Posterior cingulate gyrus (tissue), 11 donors: ENCODE measurements at regions of chr7 and their contacts with region 1.

Region 1: DNA sequence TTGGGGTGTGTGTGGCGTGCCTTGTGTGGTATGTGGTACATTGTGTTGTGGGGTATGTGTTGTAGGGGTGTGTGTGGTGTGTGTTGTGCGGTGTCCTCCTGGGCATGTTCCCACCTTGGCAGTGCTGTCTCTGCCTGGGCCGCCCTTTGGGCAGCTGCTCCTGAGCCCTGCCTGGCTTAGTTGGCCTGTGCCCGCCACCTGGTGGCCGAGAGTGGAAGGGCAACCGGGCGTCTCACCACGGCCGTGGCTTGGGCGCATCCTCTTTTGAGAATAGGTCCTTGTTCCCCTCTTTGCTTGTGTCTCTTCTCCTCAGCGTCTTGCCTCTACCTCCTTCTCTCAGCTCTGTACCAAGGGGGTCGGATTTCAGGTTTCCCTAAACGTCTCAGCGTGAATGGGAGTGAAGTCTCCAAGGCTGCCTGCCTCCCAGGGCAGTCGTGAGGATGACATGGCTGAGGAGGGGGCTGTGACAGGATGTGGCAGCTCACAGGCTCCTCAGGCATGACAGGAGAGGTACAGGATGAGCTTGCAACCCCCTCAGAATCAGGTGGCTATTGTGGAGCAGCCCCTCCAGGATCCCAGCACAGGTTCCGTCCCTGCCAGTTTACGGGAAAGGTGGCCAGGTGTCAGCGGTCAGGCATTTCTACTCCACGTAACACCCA is 98.4 kb upstream of the PODXL start:
- DNase-seq: peak; percentile 69 to 98 (median 91)

Region 2: DNA sequence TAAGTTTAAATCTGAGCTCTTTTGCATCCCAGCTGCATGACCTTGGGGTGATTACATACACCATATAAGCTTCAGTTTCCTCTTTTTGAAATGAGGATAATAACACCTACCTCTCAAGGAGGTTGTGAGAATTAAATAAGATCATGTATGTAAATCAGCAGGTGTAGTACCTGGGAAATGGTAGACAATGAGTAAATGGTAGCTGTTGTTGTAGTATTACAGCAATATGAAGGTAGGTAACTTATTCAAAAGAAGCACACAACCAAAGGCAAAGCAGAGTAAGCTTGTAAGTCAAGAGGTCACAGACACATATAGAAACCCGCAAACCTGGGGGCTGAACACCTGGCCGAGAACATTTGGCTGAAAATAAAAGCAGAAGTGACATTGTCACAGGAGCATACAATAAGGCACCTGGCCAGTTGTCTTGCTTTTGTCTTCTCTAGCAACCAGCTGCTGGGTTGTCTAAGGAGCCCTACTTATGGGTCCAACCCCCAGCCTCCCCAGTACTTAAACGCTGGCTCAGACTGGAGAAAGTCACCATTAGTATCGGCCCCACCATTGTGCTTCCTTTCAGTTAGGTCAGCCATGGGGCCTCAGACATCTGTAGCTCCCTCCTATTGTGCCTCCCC is 530.7 kb before region 1 on chr7:
- intact Hi-C with region 1: no loop called
- DNase-seq: no peak

Region 3: GRCh38 chr7:131436384-131436783 is 218.4 kb before region 1 on chr7:
- intact Hi-C with region 1: no loop called
- DNase-seq: no peak

Region 4: GRCh38 chr7:131507592-131508331 is 147.0 kb before region 1 on chr7:
- intact Hi-C with region 1: loop called (anchors 1 kb)
- DNase-seq: peak; percentile 79 to 98 (median 90)

Region 5: DNA sequence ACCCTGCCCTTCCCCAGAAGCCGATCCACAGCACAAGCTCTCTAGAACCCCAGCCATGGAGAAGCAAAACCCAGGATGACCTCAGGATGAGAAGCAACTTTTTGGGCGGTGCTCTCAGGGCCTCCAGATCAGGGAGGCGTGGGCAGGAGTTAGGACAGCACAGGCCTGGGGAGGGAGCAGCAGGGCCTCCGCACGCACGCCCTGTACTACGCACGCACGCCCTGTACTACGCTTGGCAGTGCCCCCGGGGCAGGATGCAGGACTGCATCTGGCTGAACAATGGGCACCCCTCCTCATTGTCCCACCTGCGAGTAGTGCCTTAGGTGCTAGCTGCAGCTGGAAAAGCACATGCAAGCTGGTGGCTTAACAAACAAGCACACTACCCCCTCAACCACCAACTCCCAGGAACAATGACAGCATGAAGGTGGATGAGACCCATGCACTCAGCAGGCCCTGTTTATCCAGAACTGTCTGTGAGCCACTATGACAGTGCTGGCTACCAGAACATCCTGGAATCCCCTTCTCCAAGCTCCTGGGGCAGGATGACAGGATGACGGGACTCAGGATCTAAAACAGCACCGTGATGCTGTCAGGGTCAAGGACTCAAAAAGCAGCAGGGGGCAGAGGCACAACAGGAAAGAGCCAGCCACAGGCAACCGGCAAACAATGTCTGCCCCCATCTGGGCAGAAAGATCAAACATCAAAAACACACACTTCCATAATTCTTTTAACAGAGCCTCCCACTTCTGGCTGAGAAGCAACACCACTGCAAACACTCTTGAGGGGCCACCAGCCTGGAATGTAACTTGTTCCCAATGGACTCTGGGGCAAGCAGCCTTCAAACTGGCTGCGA is 110.1 kb before region 1 on chr7:
- intact Hi-C with region 1: loop called (anchors 2 kb)
- DNase-seq: peak in 3 of 10 donors; percentile 40 to 79 (median 78)

Region 6: GRCh38 chr7:131556052-131556908 is 98.5 kb before region 1 on chr7 and contains the start of gene PODXL:
- intact Hi-C with region 1: loop called (anchors 5 kb)
- DNase-seq: peak; percentile 34 to 94 (median 48)

Region 7: DNA sequence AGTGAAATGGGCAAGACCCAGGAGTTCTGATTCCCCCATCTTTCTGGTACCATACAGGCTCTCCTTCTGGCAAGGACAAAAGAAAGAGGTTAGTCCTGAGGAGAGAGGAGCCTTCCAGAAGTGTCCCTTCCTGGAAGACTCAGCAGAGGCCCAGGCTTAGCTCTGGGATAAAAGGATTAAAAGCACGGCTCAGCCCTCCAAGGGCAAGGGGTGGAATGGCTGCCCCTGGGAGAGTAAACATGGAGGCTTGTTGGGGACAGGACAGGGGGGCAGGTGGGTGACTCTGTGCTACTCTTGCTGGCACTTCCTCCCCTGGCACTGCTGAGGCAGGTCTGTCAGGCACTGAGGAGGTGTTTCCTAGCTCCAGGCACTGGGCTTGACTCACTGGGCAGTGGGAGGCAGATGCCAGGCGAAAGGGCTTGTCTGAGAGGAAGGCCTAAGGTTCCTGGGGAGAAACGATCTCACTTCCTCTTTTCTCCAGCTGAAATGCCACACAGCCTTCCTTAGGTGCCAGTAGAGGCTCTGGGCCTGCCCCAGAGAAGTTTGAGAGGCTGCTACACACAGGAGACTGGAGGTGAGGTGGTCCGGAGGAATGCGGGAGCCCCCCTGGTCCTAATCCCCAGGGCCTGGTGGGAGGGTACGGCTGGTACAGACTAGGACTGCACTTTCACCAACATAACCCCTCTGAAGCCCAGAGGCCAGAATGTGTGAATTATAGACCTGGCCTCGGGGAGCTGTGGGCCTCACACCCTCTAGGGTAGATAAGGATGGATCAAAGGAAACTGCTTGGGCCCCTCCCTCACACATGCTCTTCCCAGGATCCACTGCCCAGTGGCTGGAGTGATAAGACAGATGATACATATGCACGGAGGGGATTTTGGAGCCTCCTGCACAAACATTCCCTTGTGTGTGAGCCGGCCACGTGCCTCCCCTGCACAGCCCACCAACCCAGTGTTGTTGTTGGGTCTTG is 35.2 kb before region 1 on chr7:
- intact Hi-C with region 1: no loop called
- DNase-seq: peak in 1 of 10 donors; percentile 45